Activated CD4-positive, alpha-beta memory T cell treated with anti-CD3 and anti-CD28 coated beads for 36 hours (primary cell): ENCODE measurements at regions of chr2 and their contacts with region 1.

Region 1: DNA sequence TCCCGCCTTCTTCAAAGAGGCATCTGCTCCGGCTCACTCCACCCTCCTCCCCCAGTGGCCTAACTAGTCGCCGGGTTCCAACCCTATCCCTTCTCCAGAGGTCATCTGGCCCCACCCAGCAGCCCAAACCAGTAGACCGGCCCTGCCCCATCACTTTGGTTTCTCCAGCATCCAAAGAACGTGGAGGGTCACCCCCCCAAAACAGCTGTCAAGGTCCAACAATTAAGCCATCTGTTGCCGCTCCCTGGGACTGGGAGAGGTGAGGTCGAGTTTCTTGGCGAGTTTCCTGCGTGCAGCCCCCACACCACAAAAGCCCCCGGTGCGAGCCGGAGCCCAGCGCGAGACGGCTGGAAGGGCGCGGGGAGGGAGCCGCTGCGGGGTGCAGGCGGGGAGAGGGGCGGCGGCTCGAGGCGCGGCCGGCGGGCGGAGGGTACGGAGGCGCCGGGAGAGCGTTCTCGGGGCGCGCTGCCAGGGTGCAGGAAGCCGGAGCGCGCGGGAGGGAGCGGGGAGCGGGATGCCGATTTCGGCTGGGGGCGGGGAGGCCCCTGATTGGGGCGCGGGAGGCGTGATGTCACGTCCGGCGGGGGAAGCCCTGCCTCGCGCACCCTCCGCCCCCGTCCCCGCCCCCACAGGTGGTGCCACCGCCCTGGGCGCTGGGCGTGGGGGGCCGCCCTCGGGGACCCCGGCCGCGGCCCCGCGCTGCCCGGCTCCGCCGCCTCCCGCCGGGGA is 571 bp upstream of the GPC1 start:
- DNase-seq: peak; percentile 88
- H3K4me3 Mint-ChIP-seq: peak overlapping the region; percentile 76
- H3K27ac Mint-ChIP-seq: no peak overlapping the region
- H3K4me1 Mint-ChIP-seq: peaks cover 14% of the 10 kb centered on the region
- H3K27me3 Mint-ChIP-seq: peaks cover 24% of the 10 kb centered on the region

Region 2: DNA sequence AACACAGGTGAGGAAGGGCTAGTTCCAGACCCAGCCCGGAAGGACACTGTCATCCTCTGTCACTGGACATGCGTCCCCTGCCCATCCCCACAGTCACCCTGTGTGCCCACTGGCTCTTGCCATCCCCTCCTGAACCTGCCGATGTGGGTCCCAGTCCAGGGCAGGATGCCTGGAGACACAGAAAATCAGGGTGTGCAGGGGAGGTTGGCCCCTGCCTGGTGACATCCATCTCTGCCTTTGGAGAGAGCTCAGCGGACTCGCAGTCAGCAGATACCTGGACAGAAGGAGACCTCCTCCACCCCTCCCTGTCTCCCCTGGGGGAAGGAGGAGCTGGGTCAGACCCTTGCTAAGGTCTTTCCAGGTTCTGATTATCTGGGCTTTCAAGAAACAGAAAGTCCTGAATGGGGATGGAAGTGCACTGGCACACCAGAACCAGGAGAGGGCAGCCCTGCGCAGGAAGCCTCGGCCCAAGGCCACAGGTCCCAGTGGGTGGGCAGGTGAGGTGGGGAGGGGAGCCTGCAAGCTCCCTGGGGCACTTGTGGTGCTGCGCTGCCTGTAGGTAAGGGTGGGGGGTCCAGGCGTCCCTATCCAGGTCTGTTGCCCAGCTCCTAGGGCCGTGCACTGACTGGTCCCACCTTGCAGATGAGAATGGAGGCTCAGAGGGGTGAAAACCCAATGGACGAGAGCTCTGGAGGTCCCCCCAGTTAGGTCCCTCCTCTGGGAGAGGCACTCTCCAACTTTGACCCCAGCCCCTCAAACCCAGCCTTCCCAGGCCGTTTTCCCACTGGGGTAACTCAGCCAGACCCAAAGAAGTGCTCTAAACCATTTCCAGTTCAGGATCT is 284.7 kb before region 1 on chr2:
- CTCF ChIA-PET with region 1: interaction called, 3 read pairs
- POLR2A ChIA-PET with region 1: no interaction called
- intact Hi-C with region 1: loop called (anchors 1 kb)
- DNase-seq: peak; percentile 45
- H3K4me3 Mint-ChIP-seq: no peak overlapping the region
- H3K27ac Mint-ChIP-seq: no peak overlapping the region
- H3K4me1 Mint-ChIP-seq: no peaks in the 10 kb centered on the region
- H3K27me3 Mint-ChIP-seq: peaks cover 11% of the 10 kb centered on the region

Region 3: GRCh38 chr2:240560480-240561326 is 125.8 kb after region 1 on chr2:
- CTCF ChIA-PET with region 1: no interaction called
- POLR2A ChIA-PET with region 1: no interaction called
- intact Hi-C with region 1: no loop called
- DNase-seq: peak; percentile 100
- H3K4me3 Mint-ChIP-seq: peak overlapping the region; percentile 88
- H3K27ac Mint-ChIP-seq: peak overlapping the region; percentile 89
- H3K4me1 Mint-ChIP-seq: peaks cover 75% of the 10 kb centered on the region
- H3K27me3 Mint-ChIP-seq: no peaks in the 10 kb centered on the region